B cell (primary cell): ENCODE measurements at regions of chr11 and their contacts with region 1.

Region 1: GRCh38 chr11:73779084-73779902 is 8.4 kb upstream of the MRPL48 start:
- DNase-seq: peak; percentile 97
- ATAC-seq: peak; percentile 99
- H3K4me3 ChIP-seq: peak overlapping the region; percentile 54 to 87 (median 79)
- H3K4me3 Mint-ChIP-seq: peak overlapping the region; percentile 99
- H3K27ac ChIP-seq: peak overlapping the region; percentile 90 to 96
- H3K27ac Mint-ChIP-seq: peak overlapping the region; percentile 99
- H3K4me1 ChIP-seq: peaks cover 6 to 7% of the 10 kb centered on the region in 2 donors
- H3K4me1 Mint-ChIP-seq: peaks cover 10% of the 10 kb centered on the region
- H3K27me3 ChIP-seq: no peaks in the 10 kb centered on the region
- H3K27me3 Mint-ChIP-seq: peaks cover 3% of the 10 kb centered on the region
- CTCF ChIP-seq: no peak

Region 2: DNA sequence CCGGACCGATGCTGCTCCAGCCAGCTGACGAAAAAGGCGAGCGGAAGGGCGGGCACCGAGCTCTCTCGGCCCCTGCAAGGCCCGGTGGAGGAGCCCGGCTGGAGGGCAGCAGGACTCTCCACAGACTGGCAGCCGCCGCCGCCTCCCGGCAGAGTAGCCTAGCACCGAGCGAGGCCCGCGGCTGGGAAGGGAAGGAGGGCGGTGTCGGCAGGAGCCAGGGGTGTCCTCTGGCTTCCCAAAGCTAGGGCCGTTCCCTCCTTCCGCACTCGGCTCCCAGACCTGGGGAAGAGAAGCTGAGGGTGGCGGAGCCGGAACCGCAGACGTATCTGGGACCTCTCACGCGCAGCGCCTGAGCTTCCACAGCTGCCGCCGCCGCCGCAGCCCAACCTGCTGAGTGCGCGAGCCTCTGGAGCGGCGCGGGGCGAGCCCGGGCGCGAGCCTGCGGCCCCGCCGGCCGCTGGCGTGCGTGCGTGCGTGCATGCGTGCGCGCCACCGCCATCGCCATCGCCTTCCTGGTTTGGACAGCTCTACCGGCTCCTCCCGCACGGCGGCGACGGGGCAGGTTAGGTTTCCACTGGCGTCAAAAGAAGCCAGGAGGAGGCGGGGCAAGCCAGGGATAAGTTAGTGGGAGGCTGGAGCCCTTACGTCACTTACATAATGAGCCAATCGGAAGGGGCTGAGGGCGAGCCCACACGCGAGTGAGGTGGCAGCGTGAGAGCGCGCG is 18.5 kb before region 1 on chr11 and contains the start of gene RAB6A:
- CTCF ChIA-PET with region 1: interaction called, 20 read pairs
- POLR2A ChIA-PET with region 1: interaction called, 53 read pairs
- intact Hi-C with region 1: loop called (anchors 1 kb)
- DNase-seq: peak; percentile 100
- ATAC-seq: peak; percentile 88
- H3K4me3 ChIP-seq: peak within 1 kb of the TSS; percentile 39 to 91 (median 86)
- H3K4me3 Mint-ChIP-seq: peak within 1 kb of the TSS; percentile 86
- H3K27ac ChIP-seq: peak within 1 kb of the TSS; percentile 81 to 89
- H3K27ac Mint-ChIP-seq: peak within 1 kb of the TSS; percentile 92
- H3K4me1 ChIP-seq: peaks cover 15 to 17% of the 10 kb centered on the region in 2 donors
- H3K4me1 Mint-ChIP-seq: peaks cover 27% of the 10 kb centered on the region
- H3K27me3 ChIP-seq: no peaks in the 10 kb centered on the region
- H3K27me3 Mint-ChIP-seq: peaks cover 3% of the 10 kb centered on the region
- CTCF ChIP-seq: peak; percentile 28
- total RNA-seq, gene RAB6A: 70.5 and 80.5 TPM in 2 replicates

Region 3: DNA sequence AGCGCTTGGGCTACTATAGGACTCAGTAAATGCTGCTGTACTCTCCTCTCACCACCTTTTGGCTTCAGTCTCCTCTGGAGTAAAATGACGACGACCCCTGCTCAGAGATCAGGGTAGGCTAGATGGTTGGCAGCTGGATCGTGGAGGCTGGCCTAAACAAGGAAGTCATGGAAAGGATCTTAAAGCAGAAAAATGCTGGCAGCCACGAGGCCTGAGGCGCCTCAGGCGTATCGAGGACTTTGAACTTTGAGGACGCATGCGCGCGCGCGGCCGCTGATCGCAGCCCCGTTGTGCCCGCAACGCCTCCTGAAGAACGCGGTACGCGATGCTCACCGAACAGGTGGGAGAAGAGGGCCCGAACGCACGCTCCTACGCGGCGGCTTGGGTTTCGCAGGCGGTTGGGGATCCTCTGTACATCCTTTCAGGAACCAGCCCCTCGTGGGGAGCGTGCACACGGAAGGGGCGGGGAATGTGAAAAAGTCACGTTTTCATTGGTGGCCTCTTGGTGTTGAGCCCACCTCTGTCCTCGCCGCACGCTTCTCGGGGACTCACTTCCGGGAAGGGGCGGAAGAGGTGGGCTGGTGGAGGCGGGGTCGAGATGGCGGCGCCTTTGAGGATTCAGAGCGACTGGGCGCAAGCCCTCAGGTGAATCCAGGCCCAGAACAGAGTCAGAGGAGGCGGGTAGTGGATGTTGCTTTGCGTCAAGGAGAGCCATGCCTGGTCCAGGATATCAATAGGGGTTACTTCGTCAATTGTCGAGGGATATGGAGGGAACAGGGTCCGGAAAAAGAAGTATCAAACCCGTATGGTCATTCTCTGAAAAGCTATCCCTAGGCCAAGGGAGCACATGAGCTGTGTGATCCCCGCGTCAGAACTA is 97.4 kb after region 1 on chr11 and contains the starts of genes COA4 and PAAF1:
- CTCF ChIA-PET with region 1: no interaction called
- POLR2A ChIA-PET with region 1: no interaction called
- intact Hi-C with region 1: loop called (anchors 1 kb)
- DNase-seq: peak; percentile 97
- ATAC-seq: peak; percentile 98
- H3K4me3 ChIP-seq: peak within 1 kb of the TSS; percentile 76 to 88 (median 83)
- H3K4me3 Mint-ChIP-seq: peak within 1 kb of the TSS; percentile 99
- H3K27ac ChIP-seq: peak within 1 kb of the TSS; percentile 45 to 71
- H3K27ac Mint-ChIP-seq: peak within 1 kb of the TSS; percentile 99
- H3K4me1 ChIP-seq: peaks cover 19 to 24% of the 10 kb centered on the region in 2 donors
- H3K4me1 Mint-ChIP-seq: peaks cover 31% of the 10 kb centered on the region
- H3K27me3 ChIP-seq: no peaks in the 10 kb centered on the region
- H3K27me3 Mint-ChIP-seq: no peaks in the 10 kb centered on the region
- CTCF ChIP-seq: no peak
- total RNA-seq, gene COA4: 59.6 and 60.5 TPM in 2 replicates
- total RNA-seq, gene PAAF1: 19.5 and 19.9 TPM in 2 replicates

Region 4: DNA sequence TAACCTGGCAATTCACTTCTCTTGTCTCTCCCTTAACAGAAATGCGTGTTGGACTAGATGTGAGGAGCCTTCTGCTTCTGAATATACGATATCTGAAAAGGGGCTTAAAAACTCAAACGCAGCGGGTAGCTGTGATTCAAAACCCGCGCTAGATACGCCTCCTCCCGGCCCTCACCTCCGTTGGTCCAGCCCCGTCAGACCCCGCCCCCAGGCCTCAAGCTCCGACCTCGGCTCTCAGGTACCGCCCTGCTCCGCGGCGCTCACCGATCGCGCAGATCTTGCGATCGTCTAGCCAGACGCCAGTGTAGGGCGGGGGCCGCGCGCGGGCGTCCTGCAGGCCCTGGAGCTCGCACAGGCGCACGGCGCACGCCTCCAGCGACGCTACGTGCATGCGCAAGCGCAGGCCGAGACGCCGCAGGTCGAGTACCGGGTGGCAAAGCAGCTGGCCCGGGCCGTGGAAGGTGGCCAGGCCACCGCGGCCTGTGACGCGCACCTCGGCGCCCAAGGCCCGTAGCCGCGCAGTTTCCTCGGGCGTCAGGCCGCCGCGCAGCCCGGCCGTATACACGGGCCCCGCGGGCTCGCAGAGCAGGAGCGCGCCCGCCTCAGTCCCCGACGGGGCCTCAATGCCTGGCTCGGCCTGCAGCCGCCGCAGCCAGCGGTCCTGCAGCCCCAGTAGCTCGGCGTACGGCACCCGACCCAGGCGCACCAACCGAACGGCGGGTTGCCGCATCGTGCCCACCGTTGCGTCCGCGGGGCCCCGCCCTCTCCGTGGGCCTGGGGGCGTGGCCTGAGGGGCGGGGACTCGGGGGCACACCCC is 713.9 kb after region 1 on chr11 and contains the start of gene LIPT2:
- CTCF ChIA-PET with region 1: no interaction called
- POLR2A ChIA-PET with region 1: no interaction called
- intact Hi-C with region 1: loop called (anchors 10 kb)
- DNase-seq: peak; percentile 98
- ATAC-seq: peak; percentile 94
- H3K4me3 ChIP-seq: peak within 1 kb of the TSS; percentile 32 to 79 (median 75)
- H3K4me3 Mint-ChIP-seq: peak within 1 kb of the TSS; percentile 90
- H3K27ac ChIP-seq: peak within 1 kb of the TSS; percentile 47 to 78
- H3K27ac Mint-ChIP-seq: peak within 1 kb of the TSS; percentile 94
- H3K4me1 ChIP-seq: peaks cover 7 to 14% of the 10 kb centered on the region in 2 donors
- H3K4me1 Mint-ChIP-seq: peaks cover 13% of the 10 kb centered on the region
- H3K27me3 ChIP-seq: no peaks in the 10 kb centered on the region
- H3K27me3 Mint-ChIP-seq: no peaks in the 10 kb centered on the region
- CTCF ChIP-seq: no peak
- total RNA-seq, gene LIPT2: 6.5 and 20.2 TPM in 2 replicates

Region 5: DNA sequence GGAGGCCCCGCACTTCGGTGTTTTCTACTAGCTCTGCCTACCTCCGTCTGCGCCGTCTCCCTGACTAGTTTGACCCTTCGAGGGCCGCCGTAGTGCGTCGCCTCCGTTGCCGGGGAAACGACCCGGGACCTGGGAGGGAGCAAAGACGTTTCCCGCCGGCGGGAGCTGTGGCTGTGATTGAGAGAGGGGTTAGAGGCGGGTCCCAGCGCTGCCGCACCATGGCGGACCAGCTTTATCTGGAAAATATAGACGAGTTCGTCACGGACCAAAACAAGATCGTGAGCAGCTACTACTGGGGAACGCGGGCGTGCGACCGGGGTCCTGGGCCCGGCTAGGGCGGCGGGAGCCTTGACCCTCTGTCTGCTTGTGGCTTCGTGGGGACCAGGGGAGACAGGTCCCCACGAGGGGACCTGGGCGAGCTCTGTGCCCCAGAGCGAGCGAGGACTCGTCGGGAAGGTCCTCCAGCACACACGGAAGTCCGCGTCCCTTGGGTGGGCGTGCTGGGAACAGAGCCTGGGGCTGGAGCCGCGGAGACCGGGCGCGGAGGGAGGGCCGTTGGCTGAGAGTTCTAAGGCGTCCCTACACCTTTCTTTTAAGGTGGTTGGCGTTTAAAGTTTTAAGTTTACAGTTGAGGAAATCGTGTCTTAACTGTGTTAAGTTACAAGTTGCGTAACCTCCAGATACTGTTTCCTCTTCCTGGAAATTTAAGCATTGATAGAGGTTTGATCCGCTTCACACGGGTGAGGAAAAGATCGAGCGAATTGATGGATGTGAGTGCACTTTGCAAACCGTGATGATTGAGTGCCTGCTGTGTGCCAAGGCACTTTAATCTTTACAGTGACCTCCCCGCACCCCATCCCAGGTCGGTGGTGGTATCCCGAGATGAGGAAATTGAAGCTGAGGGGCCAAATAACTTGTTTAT is 813.4 kb after region 1 on chr11 and contains the start of gene POLD3:
- CTCF ChIA-PET with region 1: no interaction called
- POLR2A ChIA-PET with region 1: no interaction called
- intact Hi-C with region 1: loop called (anchors 5 kb)
- DNase-seq: peak; percentile 91
- ATAC-seq: peak; percentile 97
- H3K4me3 ChIP-seq: peak within 1 kb of the TSS; percentile 82 to 99 (median 94)
- H3K4me3 Mint-ChIP-seq: peak within 1 kb of the TSS; percentile 100
- H3K27ac ChIP-seq: peak within 1 kb of the TSS; percentile 47 to 84
- H3K27ac Mint-ChIP-seq: peak within 1 kb of the TSS; percentile 97
- H3K4me1 ChIP-seq: peaks cover 10 to 13% of the 10 kb centered on the region in 2 donors
- H3K4me1 Mint-ChIP-seq: peaks cover 21% of the 10 kb centered on the region
- H3K27me3 ChIP-seq: no peaks in the 10 kb centered on the region
- H3K27me3 Mint-ChIP-seq: no peaks in the 10 kb centered on the region
- CTCF ChIP-seq: no peak
- total RNA-seq, gene POLD3: 13.5 and 17.6 TPM in 2 replicates